A673 (cell line): ENCODE measurements at regions of chr22 and their contacts with region 1.

Region 1: DNA sequence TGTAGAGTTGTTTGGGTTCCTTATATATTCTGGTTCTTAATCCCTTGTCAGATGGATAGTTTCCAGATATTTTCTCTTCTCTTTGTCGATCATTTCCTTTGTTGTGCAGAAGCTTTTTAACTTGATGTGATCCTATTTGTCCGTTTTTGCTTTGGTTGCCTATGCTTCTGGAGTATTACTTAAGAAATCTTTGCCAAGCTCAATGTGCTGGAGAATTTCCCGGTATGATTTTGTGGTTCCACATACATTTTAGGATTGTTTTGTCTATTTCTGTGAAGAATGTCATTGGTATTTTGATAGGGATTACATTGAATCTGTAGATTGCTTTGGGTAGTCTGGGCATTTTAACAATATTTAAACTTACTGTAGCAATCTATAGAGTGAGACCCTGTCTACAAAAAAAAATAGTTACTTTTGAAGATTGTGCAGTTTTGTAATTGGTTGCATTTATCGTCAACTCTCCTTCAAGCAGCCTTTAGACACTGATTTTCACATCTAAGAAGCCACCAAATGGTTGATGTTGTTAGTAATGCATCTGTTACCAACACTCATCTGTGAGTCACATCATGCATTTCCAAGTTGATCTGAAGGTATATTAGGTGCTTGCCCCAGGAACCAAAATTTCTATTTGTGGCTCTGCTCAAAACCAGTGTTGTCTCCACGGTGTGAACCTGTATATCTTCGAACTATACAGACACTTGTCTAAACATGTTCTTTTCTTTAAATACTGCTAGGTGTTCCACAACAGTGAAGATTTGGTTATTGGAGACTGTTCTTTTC is 21.4 kb downstream of the XRCC6 start:
- DNase-seq: no peak
- H3K4me3 ChIP-seq: no peak overlapping the region
- H3K27ac ChIP-seq: no peak overlapping the region
- H3K4me1 ChIP-seq: no peaks in the 10 kb centered on the region
- H3K27me3 ChIP-seq: no peaks in the 10 kb centered on the region
- CTCF ChIP-seq: no peak

Region 2: GRCh38 chr22:41478473-41478872 is 164.0 kb before region 1 on chr22:
- CTCF ChIA-PET with region 1: no interaction called
- POLR2A ChIA-PET with region 1: interaction called, 14 read pairs
- intact Hi-C with region 1: no loop called
- DNase-seq: no peak
- H3K4me3 ChIP-seq: no peak overlapping the region
- H3K27ac ChIP-seq: no peak overlapping the region
- H3K4me1 ChIP-seq: peaks cover 16% of the 10 kb centered on the region
- H3K27me3 ChIP-seq: no peaks in the 10 kb centered on the region
- CTCF ChIP-seq: no peak

Region 3: GRCh38 chr22:41596776-41597634 is 45.5 kb before region 1 on chr22:
- CTCF ChIA-PET with region 1: no interaction called
- POLR2A ChIA-PET with region 1: no interaction called
- intact Hi-C with region 1: no loop called
- DNase-seq: peak; percentile 49
- H3K4me3 ChIP-seq: no peak overlapping the region
- H3K27ac ChIP-seq: peak overlapping the region; percentile 29
- H3K4me1 ChIP-seq: no peaks in the 10 kb centered on the region
- H3K27me3 ChIP-seq: no peaks in the 10 kb centered on the region
- CTCF ChIP-seq: peak; percentile 91

Region 4: GRCh38 chr22:41656556-41656955 is 14.0 kb after region 1 on chr22:
- CTCF ChIA-PET with region 1: no interaction called
- POLR2A ChIA-PET with region 1: no interaction called
- intact Hi-C with region 1: no loop called
- DNase-seq: peak; percentile 65
- H3K4me3 ChIP-seq: no peak overlapping the region
- H3K27ac ChIP-seq: peak overlapping the region; percentile 81
- H3K4me1 ChIP-seq: peaks cover 15% of the 10 kb centered on the region
- H3K27me3 ChIP-seq: no peaks in the 10 kb centered on the region
- CTCF ChIP-seq: no peak